B cell (primary cell): ENCODE measurements at regions of chr16 and their contacts with region 1.

Region 1: DNA sequence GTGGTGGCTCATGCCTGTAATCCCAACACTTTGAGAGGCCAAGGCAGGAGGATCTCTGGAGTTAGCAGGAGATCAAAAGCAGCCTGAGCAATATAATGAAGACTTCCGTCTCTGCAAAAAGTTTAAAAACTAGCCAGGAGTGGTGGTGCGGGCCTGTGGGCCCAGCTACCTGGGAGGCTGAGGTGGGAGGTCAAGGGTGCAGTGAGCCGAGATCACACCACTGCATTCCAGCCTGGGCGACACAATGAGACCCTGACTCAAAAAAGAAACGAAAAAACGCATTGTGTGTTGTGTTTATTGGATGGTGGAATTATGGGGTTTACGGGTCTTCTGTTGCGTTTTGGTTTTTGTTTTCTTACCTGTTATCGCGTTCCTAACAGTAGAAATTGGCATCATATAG is 863 bp upstream of the DDX19A start:
- DNase-seq: no peak
- ATAC-seq: no peak
- H3K4me3 ChIP-seq: peak overlapping the region; percentile 19 to 77 (median 71)
- H3K4me3 Mint-ChIP-seq: peak overlapping the region; percentile 79
- H3K27ac ChIP-seq: peak overlapping the region; percentile 94 to 95
- H3K27ac Mint-ChIP-seq: peak overlapping the region; percentile 96
- H3K4me1 ChIP-seq: peaks cover 13 to 19% of the 10 kb centered on the region in 2 donors
- H3K4me1 Mint-ChIP-seq: peaks cover 27% of the 10 kb centered on the region
- H3K27me3 ChIP-seq: no peaks in the 10 kb centered on the region
- H3K27me3 Mint-ChIP-seq: no peaks in the 10 kb centered on the region
- CTCF ChIP-seq: no peak

Region 2: GRCh38 chr16:70251629-70252354 is 94.0 kb before region 1 on chr16 and contains the start of gene EXOSC6:
- CTCF ChIA-PET with region 1: no interaction called
- POLR2A ChIA-PET with region 1: interaction called, 4 read pairs
- intact Hi-C with region 1: loop called (anchors 1 kb)
- DNase-seq: peak; percentile 96
- ATAC-seq: peak; percentile 97
- H3K4me3 ChIP-seq: peak within 1 kb of the TSS; percentile 19 to 76 (median 65)
- H3K4me3 Mint-ChIP-seq: peak within 1 kb of the TSS; percentile 90
- H3K27ac ChIP-seq: peak within 1 kb of the TSS; percentile 38 to 78
- H3K27ac Mint-ChIP-seq: peak within 1 kb of the TSS; percentile 98
- H3K4me1 ChIP-seq: peaks cover 0 to 24% of the 10 kb centered on the region in 2 donors
- H3K4me1 Mint-ChIP-seq: peaks cover 14% of the 10 kb centered on the region
- H3K27me3 ChIP-seq: no peaks in the 10 kb centered on the region
- H3K27me3 Mint-ChIP-seq: no peaks in the 10 kb centered on the region
- CTCF ChIP-seq: peak; percentile 92
- total RNA-seq, gene EXOSC6: 41.8 and 42.3 TPM in 2 replicates

Region 3: DNA sequence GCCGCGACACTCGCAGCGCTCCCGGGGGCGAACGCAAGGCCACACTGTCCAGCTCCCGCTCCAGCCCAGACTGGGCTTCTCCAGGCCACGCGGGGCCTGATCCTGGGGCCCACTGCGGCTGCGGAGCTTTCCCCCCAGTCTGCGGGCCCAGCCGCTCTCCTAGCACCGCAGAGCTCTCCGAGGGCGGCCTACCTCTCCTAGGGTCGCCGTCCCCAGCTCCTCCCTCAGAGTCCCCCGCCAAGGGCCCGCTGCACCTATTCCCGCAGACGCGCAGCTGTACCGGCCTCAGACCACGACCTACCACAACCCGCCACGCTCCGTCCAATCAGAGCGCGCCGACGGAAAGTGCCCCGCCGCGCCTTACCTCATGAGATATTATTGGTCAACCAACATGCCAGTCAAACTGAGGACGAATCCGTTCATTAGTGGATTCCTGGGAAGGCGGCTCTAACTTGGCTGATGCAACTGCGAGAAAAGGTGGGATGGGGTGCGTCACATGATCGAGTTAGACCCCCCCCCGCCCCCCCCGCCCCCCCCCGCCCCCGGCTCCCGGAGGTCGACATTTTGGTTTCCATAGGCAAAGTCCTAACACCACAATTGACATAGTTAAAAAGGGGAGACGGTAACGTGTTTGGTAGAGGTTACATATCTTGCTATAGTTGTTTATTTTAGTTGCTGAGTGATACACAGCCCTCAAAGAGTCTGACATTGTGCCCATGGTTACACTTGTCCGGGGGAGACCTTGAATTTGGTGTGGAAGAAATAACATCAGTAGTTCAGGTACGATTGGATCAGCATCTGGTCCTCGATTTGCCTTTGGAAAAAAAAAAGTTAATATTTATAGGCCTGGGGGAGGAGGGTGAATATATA is 56.4 kb before region 1 on chr16 and contains the start of gene AARS1:
- CTCF ChIA-PET with region 1: interaction called, 4 read pairs
- POLR2A ChIA-PET with region 1: interaction called, 5 read pairs
- intact Hi-C with region 1: loop called (anchors 2 kb)
- DNase-seq: peak; percentile 98
- ATAC-seq: peak; percentile 97
- H3K4me3 ChIP-seq: peak within 1 kb of the TSS; percentile 80 to 91 (median 86)
- H3K4me3 Mint-ChIP-seq: peak within 1 kb of the TSS; percentile 99
- H3K27ac ChIP-seq: peak within 1 kb of the TSS; percentile 79 to 90
- H3K27ac Mint-ChIP-seq: peak within 1 kb of the TSS; percentile 96
- H3K4me1 ChIP-seq: peaks cover 0 to 16% of the 10 kb centered on the region in 2 donors
- H3K4me1 Mint-ChIP-seq: peaks cover 15% of the 10 kb centered on the region
- H3K27me3 ChIP-seq: no peaks in the 10 kb centered on the region
- H3K27me3 Mint-ChIP-seq: no peaks in the 10 kb centered on the region
- CTCF ChIP-seq: no peak
- total RNA-seq, gene AARS1: 54.4 and 57.8 TPM in 2 replicates

Region 4: DNA sequence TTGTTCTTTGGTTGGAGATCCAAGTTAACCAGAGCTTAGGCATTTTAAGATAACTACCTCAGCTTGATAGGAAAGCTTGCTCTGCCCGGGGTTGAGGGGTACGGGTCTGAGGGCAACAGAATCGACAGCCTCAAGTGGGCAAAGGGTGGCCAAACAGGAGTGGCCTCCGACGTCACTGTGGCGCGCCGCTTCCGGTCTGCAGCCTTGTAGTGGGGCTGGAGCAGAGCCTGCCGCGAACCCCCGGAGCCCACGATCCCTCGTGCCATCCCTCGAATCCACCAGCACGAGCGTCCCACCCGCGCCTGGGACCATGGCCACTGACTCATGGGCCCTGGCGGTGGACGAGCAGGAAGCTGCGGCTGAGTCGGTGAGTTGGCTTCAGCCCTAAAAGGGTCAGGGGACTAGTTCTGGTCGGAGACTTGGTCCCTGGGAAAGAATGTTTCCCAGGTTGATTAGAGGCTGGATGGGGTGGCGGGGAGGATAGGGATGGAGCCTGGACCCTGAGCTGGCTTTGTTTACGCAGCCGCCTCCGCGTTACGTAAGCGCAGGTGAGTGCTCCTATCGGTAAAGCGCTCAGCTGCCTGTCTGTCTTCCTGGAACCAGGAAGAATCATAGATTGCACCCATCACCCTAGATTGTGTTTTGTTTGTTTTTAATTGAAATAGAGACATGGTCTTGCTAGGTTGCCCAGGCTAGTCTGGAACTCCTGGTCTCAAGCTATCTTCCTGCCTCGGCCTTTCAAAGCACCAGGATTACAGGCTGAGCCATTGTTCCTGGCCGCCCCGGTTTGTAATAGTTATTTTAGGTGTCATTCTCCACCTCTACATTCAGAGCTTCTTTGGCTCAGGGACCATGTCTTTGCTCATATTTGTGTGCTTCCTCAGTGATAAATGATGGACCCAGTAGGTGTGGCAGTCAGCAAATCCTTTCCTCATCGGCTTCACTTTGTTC is 46.6 kb before region 1 on chr16 and contains the start of gene DDX19B:
- CTCF ChIA-PET with region 1: interaction called, 11 read pairs
- POLR2A ChIA-PET with region 1: interaction called, 15 read pairs
- intact Hi-C with region 1: loop called (anchors 1 kb)
- DNase-seq: peak; percentile 70
- ATAC-seq: peak; percentile 90
- H3K4me3 ChIP-seq: peak within 1 kb of the TSS; percentile 57 to 98 (median 89)
- H3K4me3 Mint-ChIP-seq: peak within 1 kb of the TSS; percentile 95
- H3K27ac ChIP-seq: peak within 1 kb of the TSS; percentile 92 to 95
- H3K27ac Mint-ChIP-seq: peak within 1 kb of the TSS; percentile 96
- H3K4me1 ChIP-seq: peaks cover 8 to 17% of the 10 kb centered on the region in 2 donors
- H3K4me1 Mint-ChIP-seq: peaks cover 34% of the 10 kb centered on the region
- H3K27me3 ChIP-seq: no peaks in the 10 kb centered on the region
- H3K27me3 Mint-ChIP-seq: no peaks in the 10 kb centered on the region
- CTCF ChIP-seq: peak; percentile 10
- total RNA-seq, gene DDX19B: 31.6 and 35.8 TPM in 2 replicates

Region 5: DNA sequence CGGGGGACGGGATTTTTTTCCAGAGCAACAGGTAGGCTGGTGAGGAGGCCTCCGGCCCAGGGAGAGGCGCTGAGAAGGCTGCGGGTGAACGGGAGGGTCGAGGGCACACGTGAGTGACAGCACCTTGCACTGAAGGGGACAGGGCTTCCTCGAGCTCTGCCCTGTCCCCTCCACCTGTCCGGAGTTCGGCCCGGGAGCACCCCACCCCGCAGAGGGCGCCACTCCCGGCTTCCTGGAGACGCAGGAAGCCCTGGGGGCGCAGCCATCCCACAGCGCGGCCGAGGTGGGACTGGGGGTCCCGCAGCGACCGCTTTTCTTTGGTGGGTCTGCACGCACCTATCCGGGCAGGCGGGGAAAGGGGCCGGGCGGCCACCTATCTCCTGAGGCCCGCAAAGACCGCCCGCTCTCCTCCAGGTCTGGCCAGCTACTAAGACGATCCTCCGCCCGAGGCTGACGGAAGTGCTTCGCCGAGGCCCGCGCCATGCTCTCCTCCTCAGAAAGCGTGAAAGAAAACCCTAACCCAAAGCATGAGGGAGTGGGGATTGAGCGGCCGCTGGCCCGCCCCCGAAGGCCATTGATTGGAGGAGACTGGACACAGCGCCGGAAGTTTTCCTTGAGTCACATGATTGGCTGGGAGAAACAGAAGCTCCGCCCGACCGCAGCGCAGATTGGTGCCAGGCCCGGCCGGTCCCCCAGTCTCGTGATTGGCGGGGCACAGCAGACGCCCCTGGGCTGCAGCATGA is 35.2 kb after region 1 on chr16:
- CTCF ChIA-PET with region 1: no interaction called
- POLR2A ChIA-PET with region 1: interaction called, 7 read pairs
- intact Hi-C with region 1: loop called (anchors 1 kb)
- DNase-seq: peak; percentile 96
- ATAC-seq: peak; percentile 93
- H3K4me3 ChIP-seq: peak overlapping the region; percentile 58 to 89 (median 74)
- H3K4me3 Mint-ChIP-seq: peak overlapping the region; percentile 97
- H3K27ac ChIP-seq: peak overlapping the region; percentile 64 to 81
- H3K27ac Mint-ChIP-seq: peak overlapping the region; percentile 95
- H3K4me1 ChIP-seq: peaks cover 18 to 25% of the 10 kb centered on the region in 2 donors
- H3K4me1 Mint-ChIP-seq: peaks cover 8% of the 10 kb centered on the region
- H3K27me3 ChIP-seq: no peaks in the 10 kb centered on the region
- H3K27me3 Mint-ChIP-seq: no peaks in the 10 kb centered on the region
- CTCF ChIP-seq: no peak

Region 6: GRCh38 chr16:70638814-70639792 is 293.3 kb after region 1 on chr16:
- CTCF ChIA-PET with region 1: no interaction called
- POLR2A ChIA-PET with region 1: no interaction called
- intact Hi-C with region 1: no loop called
- DNase-seq: no peak
- ATAC-seq: no peak
- H3K4me3 ChIP-seq: no peak overlapping the region
- H3K4me3 Mint-ChIP-seq: no peak overlapping the region
- H3K27ac ChIP-seq: no peak overlapping the region
- H3K27ac Mint-ChIP-seq: no peak overlapping the region
- H3K4me1 ChIP-seq: no peaks in the 10 kb centered on the region
- H3K4me1 Mint-ChIP-seq: no peaks in the 10 kb centered on the region
- H3K27me3 ChIP-seq: no peaks in the 10 kb centered on the region
- H3K27me3 Mint-ChIP-seq: peaks cover 12% of the 10 kb centered on the region
- CTCF ChIP-seq: no peak